Ovary (tissue), 10 donors: ENCODE measurements at regions of chr9 and their contacts with region 1.

Region 1: GRCh38 chr9:37004424-37004935 is 29.6 kb downstream of the PAX5 start:
- DNase-seq: no peak
- H3K4me3 ChIP-seq: no peak overlapping the region
- H3K27ac ChIP-seq: no peak overlapping the region
- H3K4me1 ChIP-seq: peaks cover 2% of the 10 kb centered on the region
- H3K27me3 ChIP-seq: no peaks in the 10 kb centered on the region
- CTCF ChIP-seq: no peak
- EP300 ChIP-seq: no peak
- POLR2A ChIP-seq: no peak

Region 2: GRCh38 chr9:37066139-37066725 is 61.8 kb after region 1 on chr9:
- intact Hi-C with region 1: loop called in 1 of 4 experiments (anchors 10 kb)
- DNase-seq: no peak
- H3K4me3 ChIP-seq: no peak overlapping the region
- H3K27ac ChIP-seq: no peak overlapping the region
- H3K4me1 ChIP-seq: no peaks in the 10 kb centered on the region
- H3K27me3 ChIP-seq: no peaks in the 10 kb centered on the region
- CTCF ChIP-seq: no peak
- EP300 ChIP-seq: no peak
- POLR2A ChIP-seq: no peak

Region 3: GRCh38 chr9:37262410-37262809 is 257.9 kb after region 1 on chr9:
- intact Hi-C with region 1: no loop called
- DNase-seq: no peak
- H3K4me3 ChIP-seq: no peak overlapping the region
- H3K27ac ChIP-seq: no peak overlapping the region
- H3K4me1 ChIP-seq: no peaks in the 10 kb centered on the region
- H3K27me3 ChIP-seq: no peaks in the 10 kb centered on the region
- CTCF ChIP-seq: no peak
- EP300 ChIP-seq: no peak
- POLR2A ChIP-seq: no peak